CD8-positive, alpha-beta T cell (primary cell): ENCODE measurements at regions of chr11 and their contacts with region 1.

Region 1: DNA sequence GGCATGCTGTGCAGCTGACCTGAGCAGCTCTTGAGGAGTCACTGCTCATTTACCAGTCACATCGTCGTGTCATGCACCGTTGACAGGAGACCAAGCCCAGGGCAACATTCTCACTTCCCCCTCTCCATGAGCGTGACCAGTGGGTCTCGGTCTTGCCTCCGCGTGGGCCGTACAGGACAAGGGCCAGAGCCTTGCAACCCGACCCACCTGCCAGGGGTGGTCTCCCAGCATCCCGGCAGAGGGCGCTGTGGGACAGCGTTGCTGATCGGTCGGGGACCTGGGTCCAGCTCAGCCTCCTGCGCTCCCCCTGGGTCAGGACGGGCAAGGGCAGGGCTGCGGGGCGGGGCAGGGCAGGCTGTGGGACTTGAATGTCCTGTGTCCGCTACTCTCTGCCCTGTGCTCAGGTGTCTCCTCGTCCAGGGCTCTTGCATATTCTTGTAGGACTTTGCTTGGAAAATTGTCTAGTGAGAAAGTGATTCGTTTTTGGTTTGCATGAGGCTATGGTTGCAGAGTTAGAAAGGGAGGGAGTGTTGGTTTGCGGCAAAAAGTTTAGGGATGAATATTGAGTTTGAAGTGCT is 16.2 kb downstream of the EIF4G2 start:
- DNase-seq: peak; percentile 65 to 91 (median 85)
- ATAC-seq: peak; percentile 88
- H3K4me3 ChIP-seq: no peak overlapping the region
- H3K4me3 Mint-ChIP-seq: no peak overlapping the region
- H3K27ac ChIP-seq: no peak overlapping the region
- H3K27ac Mint-ChIP-seq: no peak overlapping the region
- H3K4me1 ChIP-seq: peaks cover 24% of the 10 kb centered on the region
- H3K4me1 Mint-ChIP-seq: peaks cover 31% of the 10 kb centered on the region
- H3K27me3 ChIP-seq: peaks cover 0 to 5% of the 10 kb centered on the region in 2 experiments
- H3K27me3 Mint-ChIP-seq: peaks cover 3% of the 10 kb centered on the region
- CTCF ChIP-seq: peak; percentile 90

Region 2: DNA sequence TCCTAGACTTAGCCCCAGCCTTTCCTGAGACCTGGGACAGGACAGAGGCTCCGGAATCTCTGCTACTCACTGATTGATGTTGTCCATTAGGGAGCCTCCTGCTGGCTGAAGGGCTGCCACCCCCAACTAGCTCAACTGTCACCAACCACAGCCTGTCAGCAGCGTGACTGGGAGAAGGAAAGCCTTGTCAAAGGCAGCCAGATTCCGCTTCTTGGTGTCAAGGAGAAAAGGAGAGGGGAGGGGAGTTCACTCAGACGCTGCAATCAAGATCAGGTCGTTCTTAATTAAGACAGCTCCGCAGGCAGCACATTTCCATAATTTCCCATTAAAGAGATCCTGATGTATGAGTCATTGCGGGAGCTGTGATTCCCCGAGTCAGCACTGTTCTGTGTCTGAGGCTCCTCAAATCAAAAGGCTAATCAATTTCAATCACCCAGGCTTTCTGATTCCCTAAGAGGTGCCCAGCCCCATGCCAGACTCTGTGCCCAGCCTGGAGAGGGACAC is 218.2 kb after region 1 on chr11:
- CTCF ChIA-PET with region 1: interaction called, 10 read pairs
- POLR2A ChIA-PET with region 1: interaction called, 4 read pairs
- intact Hi-C with region 1: no loop called
- DNase-seq: peak in 2 of 9 experiments; percentile 22 to 36
- ATAC-seq: no peak
- H3K4me3 ChIP-seq: no peak overlapping the region
- H3K4me3 Mint-ChIP-seq: no peak overlapping the region
- H3K27ac ChIP-seq: no peak overlapping the region
- H3K27ac Mint-ChIP-seq: no peak overlapping the region
- H3K4me1 ChIP-seq: no peaks in the 10 kb centered on the region
- H3K4me1 Mint-ChIP-seq: no peaks in the 10 kb centered on the region
- H3K27me3 ChIP-seq: peaks cover 0 to 3% of the 10 kb centered on the region in 2 experiments
- H3K27me3 Mint-ChIP-seq: peaks cover 25% of the 10 kb centered on the region
- CTCF ChIP-seq: no peak

Region 3: GRCh38 chr11:11022125-11022730 is 229.7 kb after region 1 on chr11:
- CTCF ChIA-PET with region 1: interaction called, 114 read pairs
- POLR2A ChIA-PET with region 1: interaction called, 3 read pairs
- intact Hi-C with region 1: loop called (anchors 1 kb)
- DNase-seq: peak in 3 of 9 experiments; percentile 27 to 54 (median 48)
- ATAC-seq: no peak
- H3K4me3 ChIP-seq: no peak overlapping the region
- H3K4me3 Mint-ChIP-seq: no peak overlapping the region
- H3K27ac ChIP-seq: no peak overlapping the region
- H3K27ac Mint-ChIP-seq: no peak overlapping the region
- H3K4me1 ChIP-seq: no peaks in the 10 kb centered on the region
- H3K4me1 Mint-ChIP-seq: no peaks in the 10 kb centered on the region
- H3K27me3 ChIP-seq: no peaks in the 10 kb centered on the region
- H3K27me3 Mint-ChIP-seq: peaks cover 4% of the 10 kb centered on the region
- CTCF ChIP-seq: peak; percentile 63